Cardiac septum (tissue), 1 donor: ENCODE measurements at regions of chr12 and their contacts with region 1.

Region 1: GRCh38 chr12:5428332-5429221 is 3.3 kb upstream of the NTF3 start:
- DNase-seq: no peak

Region 2: GRCh38 chr12:5309654-5310053 is 118.9 kb before region 1 on chr12:
- intact Hi-C with region 1: no loop called
- DNase-seq: no peak

Region 3: GRCh38 chr12:5633106-5633505 is 204.5 kb after region 1 on chr12:
- intact Hi-C with region 1: loop called (anchors 10 kb)
- DNase-seq: no peak

Region 4: DNA sequence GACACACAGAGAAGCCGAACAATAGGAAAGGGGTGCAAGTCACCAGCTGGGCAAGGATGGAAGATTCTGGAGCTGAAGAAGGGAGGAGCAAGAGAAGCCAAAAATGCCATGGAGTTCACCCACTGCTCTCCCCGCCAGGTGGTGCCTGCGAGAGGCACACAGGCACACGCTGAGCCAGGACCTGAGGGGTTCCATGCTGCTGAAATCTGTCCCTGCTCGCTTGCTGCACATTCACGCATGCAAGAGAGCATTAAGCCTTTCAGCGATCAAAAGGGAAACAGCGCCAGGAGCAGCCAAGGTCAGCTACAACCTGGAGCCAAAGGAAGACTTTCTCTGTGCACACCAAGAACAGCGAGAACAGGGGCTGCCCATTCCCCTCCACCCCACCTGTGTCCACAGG is 412.4 kb after region 1 on chr12:
- intact Hi-C with region 1: no loop called
- DNase-seq: no peak